K562 (cell line): ENCODE measurements at regions of chr15 and their contacts with region 1.

Region 1: GRCh38 chr15:78761891-78762385 is 49.3 kb downstream of the ADAMTS7 start:
- DNase-seq: no peak
- ATAC-seq: no peak; the same call in 2 of the 3 replicates
- H3K4me3 ChIP-seq: no peak overlapping the region
- H3K27ac ChIP-seq: no peak overlapping the region
- H3K4me1 ChIP-seq: peaks cover 0 to 21% of the 10 kb centered on the region in 2 experiments; a peak in 1 of 5 replicates
- H3K27me3 ChIP-seq: peaks cover 2 to 24% of the 10 kb centered on the region in 2 experiments; a peak in 2 of 5 replicates
- CTCF ChIP-seq: no peak
- EP300 ChIP-seq: no peak
- POLR2A ChIP-seq: no peak
- RAD21 ChIP-seq: no peak

Region 2: GRCh38 chr15:77992356-77993222 is 769.3 kb before region 1 on chr15:
- CTCF ChIA-PET with region 1: no interaction called
- POLR2A ChIA-PET with region 1: no interaction called
- in situ Hi-C with region 1: loop called (anchors 5 kb)
- intact Hi-C with region 1: no loop called
- DNase-seq: no peak
- ATAC-seq: no peak
- H3K4me3 ChIP-seq: no peak overlapping the region
- H3K27ac ChIP-seq: no peak overlapping the region
- H3K4me1 ChIP-seq: peaks cover 0 to 40% of the 10 kb centered on the region in 2 experiments; a peak in 2 of 5 replicates
- H3K27me3 ChIP-seq: peaks cover 0 to 3% of the 10 kb centered on the region in 2 experiments; a peak in 1 of 5 replicates
- CTCF ChIP-seq: no peak
- EP300 ChIP-seq: no peak
- POLR2A ChIP-seq: no peak
- RAD21 ChIP-seq: no peak